Activated CD4-positive, alpha-beta memory T cell treated with anti-CD3 and anti-CD28 coated beads for 36 hours (primary cell): ENCODE measurements at regions of chr1 and their contacts with region 1.

Region 1: GRCh38 chr1:114282751-114283403 is 129.2 kb upstream of the SYT6 start:
- DNase-seq: peak; percentile 88
- H3K4me3 Mint-ChIP-seq: no peak overlapping the region
- H3K27ac Mint-ChIP-seq: no peak overlapping the region
- H3K4me1 Mint-ChIP-seq: peaks cover 9% of the 10 kb centered on the region
- H3K27me3 Mint-ChIP-seq: no peaks in the 10 kb centered on the region

Region 2: GRCh38 chr1:113835642-113836307 is 447.1 kb before region 1 on chr1:
- CTCF ChIA-PET with region 1: interaction called, 10 read pairs
- POLR2A ChIA-PET with region 1: no interaction called
- intact Hi-C with region 1: loop called (anchors 2 kb)
- DNase-seq: no peak
- H3K4me3 Mint-ChIP-seq: no peak overlapping the region
- H3K27ac Mint-ChIP-seq: no peak overlapping the region
- H3K4me1 Mint-ChIP-seq: peaks cover 5% of the 10 kb centered on the region
- H3K27me3 Mint-ChIP-seq: no peaks in the 10 kb centered on the region

Region 3: DNA sequence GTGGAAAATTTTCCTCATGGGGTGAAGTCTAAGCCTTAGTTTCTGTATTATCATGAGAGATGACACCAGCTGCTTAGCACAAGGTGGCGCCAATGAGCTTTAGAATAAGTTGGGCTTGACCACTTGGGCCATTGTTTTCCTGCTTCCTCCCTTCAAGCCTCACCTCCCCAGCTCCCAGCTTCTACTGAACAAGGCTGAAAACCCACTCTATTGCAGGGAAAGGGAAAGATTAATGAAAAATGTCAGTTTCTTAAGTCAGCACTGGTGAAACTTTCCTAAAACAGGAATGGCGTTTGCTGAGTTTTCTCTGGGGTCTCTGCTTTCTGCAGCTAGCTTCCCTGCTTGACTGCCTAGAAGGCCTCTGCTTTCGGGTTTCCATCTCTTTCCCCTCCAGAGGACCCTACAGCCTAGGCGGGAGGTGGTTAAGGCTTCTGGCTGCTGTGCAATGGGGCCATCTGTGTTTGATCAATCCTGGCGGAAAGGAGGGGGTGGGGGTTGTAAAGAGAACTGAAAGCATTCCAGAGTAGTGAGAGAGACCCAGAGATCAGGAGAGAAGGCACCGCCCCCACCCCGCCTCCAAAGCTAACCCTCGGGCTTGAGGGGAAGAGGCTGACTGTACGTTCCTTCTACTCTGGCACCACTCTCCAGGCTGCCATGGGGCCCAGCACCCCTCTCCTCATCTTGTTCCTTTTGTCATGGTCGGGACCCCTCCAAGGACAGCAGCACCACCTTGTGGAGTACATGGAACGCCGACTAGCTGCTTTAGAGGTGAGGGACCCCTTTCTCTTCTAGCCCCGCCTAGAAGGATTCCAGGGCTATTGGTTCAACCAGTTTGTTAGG is 303.8 kb before region 1 on chr1 and contains the start of gene OLFML3:
- CTCF ChIA-PET with region 1: interaction called, 92 read pairs
- POLR2A ChIA-PET with region 1: interaction called, 5 read pairs
- intact Hi-C with region 1: loop called (anchors 1 kb)
- DNase-seq: peak; percentile 67
- H3K4me3 Mint-ChIP-seq: no peak within 1 kb of the TSS
- H3K27ac Mint-ChIP-seq: no peak within 1 kb of the TSS
- H3K4me1 Mint-ChIP-seq: peaks cover 33% of the 10 kb centered on the region
- H3K27me3 Mint-ChIP-seq: no peaks in the 10 kb centered on the region
- total RNA-seq, gene OLFML3: 0.21 TPM in 1 of 2 experiments, not detected in the other

Region 4: DNA sequence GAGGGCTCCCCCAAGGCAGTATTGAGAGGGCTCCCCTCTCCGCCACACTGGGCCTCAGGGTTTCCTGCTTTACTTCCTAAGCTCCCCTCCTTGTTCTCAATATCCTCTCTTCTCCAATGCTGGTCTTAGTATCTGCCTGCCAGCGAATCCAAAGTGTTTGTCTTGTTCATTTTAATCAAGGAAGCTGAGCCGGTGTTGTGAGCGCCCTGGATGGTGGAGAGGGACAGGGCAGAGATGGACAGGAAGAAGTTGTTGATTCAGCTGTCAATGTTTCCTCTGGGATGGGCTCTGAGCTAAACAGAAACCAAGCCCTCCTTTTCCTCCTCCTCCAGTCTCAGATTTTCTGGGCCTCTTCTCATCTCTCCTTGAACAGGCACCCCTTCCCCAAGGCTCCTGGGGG is 298.2 kb before region 1 on chr1:
- CTCF ChIA-PET with region 1: interaction called, 92 read pairs
- POLR2A ChIA-PET with region 1: no interaction called
- intact Hi-C with region 1: no loop called
- DNase-seq: no peak
- H3K4me3 Mint-ChIP-seq: no peak overlapping the region
- H3K27ac Mint-ChIP-seq: no peak overlapping the region
- H3K4me1 Mint-ChIP-seq: no peaks in the 10 kb centered on the region
- H3K27me3 Mint-ChIP-seq: no peaks in the 10 kb centered on the region

Region 5: DNA sequence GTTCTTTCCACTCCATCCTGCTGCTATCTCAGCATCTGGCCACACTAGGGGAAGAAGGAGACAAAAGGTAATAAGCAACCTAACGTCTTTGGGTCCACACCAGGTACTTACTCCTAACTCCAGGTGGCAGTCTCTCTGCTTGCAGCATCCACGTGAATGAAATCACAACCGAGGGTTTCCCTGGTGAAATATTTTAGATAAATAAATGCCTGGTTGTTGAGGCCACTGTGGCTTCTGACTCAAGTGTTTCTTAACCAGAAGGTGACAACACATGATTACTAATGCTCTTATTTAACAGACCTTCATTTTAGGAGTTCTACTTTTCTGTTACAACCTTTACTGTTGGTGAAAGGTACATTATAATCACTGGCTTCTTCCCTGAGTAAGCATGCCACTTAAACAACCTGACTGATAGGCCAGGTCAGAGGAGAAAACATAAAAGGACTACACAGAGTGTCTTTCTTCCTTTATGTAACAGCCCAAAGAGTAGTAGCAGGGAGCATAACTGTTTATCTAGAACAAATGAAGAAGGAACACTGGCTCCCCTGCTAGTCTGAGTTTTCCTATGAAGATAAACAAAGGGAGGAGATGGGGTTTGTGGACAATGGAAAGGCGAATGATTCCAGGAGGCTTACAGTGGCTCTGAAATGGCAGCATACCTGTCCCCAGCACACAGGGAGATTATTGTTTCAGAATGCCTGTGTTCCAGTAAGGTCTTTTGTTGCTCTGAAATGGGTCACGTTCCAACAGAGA is 189.1 kb before region 1 on chr1:
- CTCF ChIA-PET with region 1: interaction called, 6 read pairs
- POLR2A ChIA-PET with region 1: no interaction called
- intact Hi-C with region 1: loop called (anchors 10 kb)
- DNase-seq: no peak
- H3K4me3 Mint-ChIP-seq: no peak overlapping the region
- H3K27ac Mint-ChIP-seq: no peak overlapping the region
- H3K4me1 Mint-ChIP-seq: peaks cover 1% of the 10 kb centered on the region
- H3K27me3 Mint-ChIP-seq: peaks cover 7% of the 10 kb centered on the region

Region 6: DNA sequence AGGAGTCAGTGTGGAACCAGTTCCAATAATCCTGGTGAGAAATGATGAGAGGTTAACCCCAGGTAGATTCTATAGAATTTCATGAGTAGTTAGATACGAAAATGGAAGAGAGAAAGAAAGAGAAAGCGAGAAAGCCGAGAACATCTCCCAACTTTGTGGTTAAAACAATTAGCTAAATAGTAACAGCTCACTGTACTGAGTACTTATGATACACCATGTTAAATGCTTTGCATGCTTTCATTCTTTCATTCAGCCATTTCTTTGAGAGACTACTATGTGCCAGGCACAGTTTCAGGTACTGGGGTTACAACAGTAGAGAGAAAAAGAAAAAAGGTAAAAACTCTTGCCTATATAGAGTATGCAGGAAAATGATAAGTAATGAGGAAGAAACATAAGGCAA is 19.5 kb before region 1 on chr1:
- CTCF ChIA-PET with region 1: interaction called, 15 read pairs
- POLR2A ChIA-PET with region 1: no interaction called
- intact Hi-C with region 1: no loop called
- DNase-seq: no peak
- H3K4me3 Mint-ChIP-seq: no peak overlapping the region
- H3K27ac Mint-ChIP-seq: no peak overlapping the region
- H3K4me1 Mint-ChIP-seq: no peaks in the 10 kb centered on the region
- H3K27me3 Mint-ChIP-seq: peaks cover 6% of the 10 kb centered on the region

Region 7: GRCh38 chr1:114270282-114270681 is 12.6 kb before region 1 on chr1:
- CTCF ChIA-PET with region 1: interaction called, 31 read pairs
- POLR2A ChIA-PET with region 1: no interaction called
- intact Hi-C with region 1: no loop called
- DNase-seq: no peak
- H3K4me3 Mint-ChIP-seq: no peak overlapping the region
- H3K27ac Mint-ChIP-seq: no peak overlapping the region
- H3K4me1 Mint-ChIP-seq: no peaks in the 10 kb centered on the region
- H3K27me3 Mint-ChIP-seq: peaks cover 4% of the 10 kb centered on the region